Vagina (tissue), 2 donors: ENCODE measurements at regions of chr22 and their contacts with region 1.

Region 1: GRCh38 chr22:41946629-41947423 is at the start of gene CENPM:
- DNase-seq: peak in 1 of 2 donors; percentile 94
- H3K4me3 ChIP-seq: peak within 1 kb of the TSS; percentile 57 to 73
- H3K27ac ChIP-seq: peak within 1 kb of the TSS; percentile 42
- H3K4me1 ChIP-seq: peaks cover 12% of the 10 kb centered on the region
- H3K27me3 ChIP-seq: no peaks in the 10 kb centered on the region
- CTCF ChIP-seq: no peak
- POLR2A ChIP-seq: no peak
- total RNA-seq, gene CENPM: not detected

Region 2: GRCh38 chr22:41746567-41747400 is 200.0 kb before region 1 on chr22:
- intact Hi-C with region 1: loop called (anchors 10 kb)
- DNase-seq: no peak
- H3K4me3 ChIP-seq: no peak overlapping the region
- H3K27ac ChIP-seq: no peak overlapping the region
- H3K4me1 ChIP-seq: no peaks in the 10 kb centered on the region
- H3K27me3 ChIP-seq: no peaks in the 10 kb centered on the region
- CTCF ChIP-seq: peak; percentile 31 to 63 (median 61)
- POLR2A ChIP-seq: no peak

Region 3: GRCh38 chr22:41822317-41823060 is 124.3 kb before region 1 on chr22:
- intact Hi-C with region 1: loop called (anchors 10 kb)
- DNase-seq: no peak
- H3K4me3 ChIP-seq: no peak overlapping the region
- H3K27ac ChIP-seq: no peak overlapping the region
- H3K4me1 ChIP-seq: peaks cover 15% of the 10 kb centered on the region
- H3K27me3 ChIP-seq: no peaks in the 10 kb centered on the region
- CTCF ChIP-seq: peak in 2 of 3 experiments; percentile 42 to 45
- POLR2A ChIP-seq: no peak

Region 4: DNA sequence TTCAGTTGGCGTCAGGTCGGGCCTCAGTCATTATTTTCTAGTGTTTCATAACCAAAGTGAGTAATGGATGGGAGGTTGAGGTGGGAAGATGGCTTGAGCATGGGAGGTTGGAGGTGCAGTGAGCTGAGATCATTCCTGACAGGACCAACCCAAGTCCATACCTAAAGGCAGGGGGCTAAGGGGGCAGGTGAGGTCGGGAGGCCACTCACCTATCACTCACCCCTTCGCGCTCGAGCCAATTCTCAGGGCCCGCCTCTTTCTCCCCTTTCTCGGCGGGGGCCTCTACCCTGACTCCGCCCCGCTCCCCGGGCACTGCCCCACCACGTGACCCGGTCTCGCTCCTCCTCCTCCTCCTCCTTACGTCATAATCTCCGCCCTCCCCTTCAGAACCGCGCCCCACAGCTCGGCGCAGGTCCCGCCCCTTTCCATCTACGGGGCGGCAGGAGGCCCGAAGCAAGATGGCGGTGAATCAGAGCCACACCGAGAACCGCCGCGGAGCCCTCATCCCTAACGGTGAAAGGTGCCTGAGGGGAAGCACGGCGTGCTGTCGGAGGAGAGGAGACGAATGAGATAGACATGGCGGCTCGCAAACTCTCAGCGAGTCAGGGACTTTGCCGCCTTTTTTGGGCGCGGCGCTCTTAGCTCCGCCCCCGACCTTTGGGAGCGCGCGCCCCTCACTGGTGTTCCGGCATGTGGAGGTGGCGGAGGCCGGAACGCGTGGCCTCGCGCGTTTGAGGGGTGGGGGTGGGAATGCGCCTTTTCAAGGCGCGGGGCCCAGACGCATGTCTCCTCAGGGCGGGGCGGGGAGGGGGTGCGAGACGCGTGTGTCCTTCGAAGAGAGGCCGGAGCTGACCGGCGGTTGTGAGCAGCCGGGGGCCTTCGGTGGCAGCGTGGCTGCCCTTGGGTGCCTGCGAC is 51.8 kb after region 1 on chr22 and contains the start of gene WBP2NL:
- intact Hi-C with region 1: no loop called
- DNase-seq: no peak
- H3K4me3 ChIP-seq: peak within 1 kb of the TSS; percentile 33 to 54
- H3K27ac ChIP-seq: no peak within 1 kb of the TSS
- H3K4me1 ChIP-seq: peaks cover 16% of the 10 kb centered on the region
- H3K27me3 ChIP-seq: no peaks in the 10 kb centered on the region
- CTCF ChIP-seq: no peak
- POLR2A ChIP-seq: no peak
- total RNA-seq, gene WBP2NL: 2.0 TPM